Lower leg skin (tissue), 4 donors: ENCODE measurements at regions of chr4 and their contacts with region 1.

Region 1: GRCh38 chr4:170776983-170777382 is 687.2 kb upstream of the AADAT start:
- DNase-seq: no peak
- H3K4me3 ChIP-seq: no peak overlapping the region
- CTCF ChIP-seq: no peak
- POLR2A ChIP-seq: no peak

Region 2: GRCh38 chr4:170138580-170139194 is 638.3 kb before region 1 on chr4:
- intact Hi-C with region 1: loop called (anchors 10 kb)
- DNase-seq: peak; percentile 51 to 92
- H3K4me3 ChIP-seq: no peak overlapping the region
- CTCF ChIP-seq: peak in 1 of 3 donors; percentile 29
- POLR2A ChIP-seq: no peak